ENCODE measurements at regions of chr1 and their contacts with region 1.

Region 1: GRCh38 chr1:209784265-209785169 is at the start of gene C1orf74:
- DNase-seq: peak; percentile 99
- H3K4me3 ChIP-seq: peak within 1 kb of the TSS; percentile 62 to 90 (median 75)
- H3K27ac ChIP-seq: peak within 1 kb of the TSS; percentile 74
- H3K4me1 ChIP-seq: peaks cover 10% of the 10 kb centered on the region
- H3K27me3 ChIP-seq: no peaks in the 10 kb centered on the region
- CTCF ChIP-seq: no peak
- POLR2A ChIP-seq: peak; percentile 97
- total RNA-seq, gene C1orf74: 2.3 and 3.0 TPM in 2 replicates

Region 2: GRCh38 chr1:209797978-209798639 is 13.6 kb after region 1 on chr1:
- CTCF ChIA-PET with region 1: interaction called, 3 read pairs
- POLR2A ChIA-PET with region 1: interaction called, 4 read pairs
- dilution Hi-C with region 1: no loop called
- intact Hi-C with region 1: loop called (anchors 1 kb)
- DNase-seq: no peak
- H3K4me3 ChIP-seq: no peak overlapping the region
- H3K27ac ChIP-seq: no peak overlapping the region
- H3K4me1 ChIP-seq: peaks cover 24% of the 10 kb centered on the region
- H3K27me3 ChIP-seq: no peaks in the 10 kb centered on the region
- CTCF ChIP-seq: peak in 1 of 2 donors; percentile 20
- POLR2A ChIP-seq: no peak

Region 3: GRCh38 chr1:209805875-209806760 is 21.6 kb after region 1 on chr1 and contains the start of gene IRF6:
- CTCF ChIA-PET with region 1: interaction called, 3 read pairs
- POLR2A ChIA-PET with region 1: no interaction called
- dilution Hi-C with region 1: no loop called
- intact Hi-C with region 1: loop called (anchors 1 kb)
- DNase-seq: peak; percentile 87
- H3K4me3 ChIP-seq: peak within 1 kb of the TSS in 2 of 3 experiments; percentile 51 to 81
- H3K27ac ChIP-seq: peak within 1 kb of the TSS; percentile 47
- H3K4me1 ChIP-seq: peaks cover 38% of the 10 kb centered on the region
- H3K27me3 ChIP-seq: no peaks in the 10 kb centered on the region
- CTCF ChIP-seq: no peak
- POLR2A ChIP-seq: peak; percentile 50
- total RNA-seq, gene IRF6: 22.1 and 42.0 TPM in 2 replicates

Measured in endothelial cell of umbilical vein (primary cell).